SK-N-SH (cell line): ENCODE measurements at regions of chr1 and their contacts with region 1.

Region 1: DNA sequence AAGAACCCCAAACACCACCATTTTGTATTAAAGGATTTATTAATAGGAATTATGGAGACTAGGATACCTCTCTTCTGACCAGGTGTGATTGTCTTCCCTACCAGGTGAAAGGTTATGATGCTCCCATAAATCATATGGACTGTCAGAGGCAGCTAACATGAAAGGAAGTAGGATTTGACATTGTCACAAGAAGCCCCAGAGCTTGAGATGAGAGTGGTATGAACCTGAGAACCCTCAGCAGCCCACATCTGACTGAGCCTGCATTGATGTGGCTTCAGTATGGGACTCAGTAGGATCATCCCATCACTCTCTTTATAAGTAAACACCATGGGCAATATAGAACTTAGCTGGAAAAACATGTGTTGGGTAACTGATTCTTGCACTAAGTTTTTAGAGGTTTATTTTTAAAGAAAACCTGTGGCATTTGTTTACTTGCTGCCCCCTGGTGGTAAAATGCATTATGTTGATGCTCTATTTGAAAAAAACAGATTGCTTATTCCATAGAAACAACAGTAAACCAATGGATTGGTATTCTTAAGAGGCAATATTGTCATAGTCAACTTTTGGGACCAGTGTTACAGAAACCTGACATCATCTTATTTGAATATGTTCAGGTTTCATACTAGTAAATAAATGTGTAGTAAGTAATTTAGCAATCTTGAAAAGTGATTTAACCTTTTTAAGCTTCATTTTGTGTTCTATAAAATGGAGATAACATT is 16.6 kb upstream of the CACYBP start:
- DNase-seq: peak; percentile 28
- H3K4me3 ChIP-seq: no peak overlapping the region; a peak in 1 of 4 replicates
- H3K27ac ChIP-seq: no peak overlapping the region
- H3K4me1 ChIP-seq: no peaks in the 10 kb centered on the region
- H3K27me3 ChIP-seq: no peaks in the 10 kb centered on the region
- CTCF ChIP-seq: peak; percentile 73
- EP300 ChIP-seq: no peak
- RAD21 ChIP-seq: peak; percentile 65

Region 2: DNA sequence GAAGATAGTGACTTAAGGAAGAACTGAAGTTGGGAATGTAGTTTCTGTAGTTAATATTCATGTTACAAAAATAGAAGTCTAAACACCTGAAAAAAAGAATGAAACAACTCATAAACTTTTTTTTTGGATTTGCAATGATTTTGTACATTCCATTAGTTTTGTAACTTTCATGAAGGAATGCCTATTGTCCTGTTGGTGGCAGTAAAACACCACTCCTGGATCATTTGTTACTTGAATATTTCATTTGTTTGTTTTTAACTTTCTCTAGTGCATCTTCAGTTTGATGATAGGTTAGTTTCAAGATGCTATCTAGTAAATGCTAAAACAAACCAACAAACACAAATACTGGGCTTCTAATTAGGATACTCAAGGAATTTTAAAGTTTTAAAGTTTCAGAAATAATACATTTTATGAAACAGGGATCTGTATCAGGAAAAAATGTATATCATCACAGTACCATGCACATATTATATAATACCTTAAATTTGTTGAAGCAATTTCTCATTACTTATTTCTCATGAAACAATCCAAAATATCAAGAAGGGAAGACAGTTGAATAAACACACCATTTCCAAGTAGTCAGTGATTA is 213.1 kb before region 1 on chr1:
- CTCF ChIA-PET with region 1: interaction called, 15 read pairs
- POLR2A ChIA-PET with region 1: no interaction called
- DNase-seq: peak; percentile 45
- H3K4me3 ChIP-seq: peak overlapping the region in 1 of 2 experiments; percentile 10; a peak in 1 of 4 replicates
- H3K27ac ChIP-seq: no peak overlapping the region
- H3K4me1 ChIP-seq: no peaks in the 10 kb centered on the region
- H3K27me3 ChIP-seq: no peaks in the 10 kb centered on the region
- CTCF ChIP-seq: peak; percentile 92
- EP300 ChIP-seq: no peak
- RAD21 ChIP-seq: peak; percentile 92

Region 3: GRCh38 chr1:174800216-174800851 is 182.8 kb before region 1 on chr1:
- CTCF ChIA-PET with region 1: interaction called, 11 read pairs
- POLR2A ChIA-PET with region 1: no interaction called
- DNase-seq: peak; percentile 43
- H3K4me3 ChIP-seq: peak overlapping the region; percentile 45 to 69
- H3K27ac ChIP-seq: peak overlapping the region; percentile 11 to 30; a peak in 2 of 4 replicates
- H3K4me1 ChIP-seq: peaks cover 3 to 6% of the 10 kb centered on the region in 2 experiments; a peak in 3 of 4 replicates
- H3K27me3 ChIP-seq: no peaks in the 10 kb centered on the region
- CTCF ChIP-seq: no peak
- EP300 ChIP-seq: no peak
- RAD21 ChIP-seq: no peak

Region 4: GRCh38 chr1:174964261-174964971 is 18.7 kb before region 1 on chr1:
- CTCF ChIA-PET with region 1: interaction called, 13 read pairs
- POLR2A ChIA-PET with region 1: no interaction called
- DNase-seq: no peak
- H3K4me3 ChIP-seq: no peak overlapping the region
- H3K27ac ChIP-seq: no peak overlapping the region
- H3K4me1 ChIP-seq: peaks cover 0 to 2% of the 10 kb centered on the region in 2 experiments; a peak in 2 of 4 replicates
- H3K27me3 ChIP-seq: no peaks in the 10 kb centered on the region
- CTCF ChIP-seq: no peak
- EP300 ChIP-seq: no peak
- RAD21 ChIP-seq: no peak

Region 5: GRCh38 chr1:174969977-174970376 is 13.2 kb before region 1 on chr1:
- CTCF ChIA-PET with region 1: interaction called, 13 read pairs
- POLR2A ChIA-PET with region 1: no interaction called
- DNase-seq: no peak
- H3K4me3 ChIP-seq: no peak overlapping the region
- H3K27ac ChIP-seq: no peak overlapping the region
- H3K4me1 ChIP-seq: peaks cover 0 to 7% of the 10 kb centered on the region in 2 experiments; a peak in 2 of 4 replicates
- H3K27me3 ChIP-seq: no peaks in the 10 kb centered on the region
- CTCF ChIP-seq: no peak
- EP300 ChIP-seq: no peak
- RAD21 ChIP-seq: no peak

Region 6: DNA sequence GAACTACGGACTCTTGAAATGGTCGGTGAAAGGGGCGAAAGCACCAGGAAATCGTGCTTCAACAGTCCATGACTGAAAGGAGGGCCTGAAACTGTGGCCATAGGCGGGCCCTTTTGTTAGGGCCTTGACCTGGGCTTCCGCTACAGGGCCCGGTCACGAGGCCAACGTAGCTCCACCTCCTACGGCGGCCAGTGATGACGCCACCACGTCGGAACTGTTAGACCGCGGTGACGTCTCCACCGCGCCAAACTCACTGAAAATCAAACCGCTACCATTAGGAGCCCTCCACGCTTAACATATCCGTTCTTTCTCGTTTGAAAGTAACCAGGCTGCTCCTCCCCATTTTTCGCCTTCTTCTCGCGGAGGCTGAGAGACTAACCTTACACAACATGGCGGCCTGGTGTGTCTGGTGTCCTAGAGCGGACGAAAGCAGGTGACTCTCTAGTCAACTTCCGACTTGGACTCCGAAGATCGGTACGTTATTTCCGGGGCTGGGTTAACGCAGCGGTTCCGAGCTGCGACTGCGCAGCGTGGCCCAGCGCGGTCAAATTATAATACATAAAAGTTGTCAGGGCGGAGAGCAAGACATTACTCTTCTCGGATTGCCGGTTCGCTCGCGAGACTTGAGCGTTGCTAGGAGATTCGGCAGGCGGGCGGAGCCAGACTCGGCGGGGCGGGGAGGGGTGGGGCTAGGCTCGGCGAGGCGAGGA is 16.2 kb after region 1 on chr1:
- CTCF ChIA-PET with region 1: interaction called, 17 read pairs
- POLR2A ChIA-PET with region 1: interaction called, 3 read pairs
- DNase-seq: peak; percentile 79
- H3K4me3 ChIP-seq: peak overlapping the region; percentile 91 to 100
- H3K27ac ChIP-seq: peak overlapping the region; percentile 98 to 100
- H3K4me1 ChIP-seq: peaks cover 0 to 9% of the 10 kb centered on the region in 2 experiments; a peak in 3 of 4 replicates
- H3K27me3 ChIP-seq: no peaks in the 10 kb centered on the region
- CTCF ChIP-seq: no peak
- EP300 ChIP-seq: no peak
- RAD21 ChIP-seq: no peak